Activated CD4-positive, alpha-beta memory T cell treated with anti-CD3 and anti-CD28 coated beads for 36 hours (primary cell): ENCODE measurements at regions of chr19 and their contacts with region 1.

Region 1: GRCh38 chr19:2475702-2476450 is at the start of gene GADD45B:
- DNase-seq: peak; percentile 98
- H3K4me3 Mint-ChIP-seq: peak within 1 kb of the TSS; percentile 93
- H3K27ac Mint-ChIP-seq: peak within 1 kb of the TSS; percentile 91
- H3K4me1 Mint-ChIP-seq: peaks cover 18% of the 10 kb centered on the region
- H3K27me3 Mint-ChIP-seq: peaks cover 3% of the 10 kb centered on the region
- total RNA-seq, gene GADD45B: 34.5 to 38.1 TPM

Region 2: DNA sequence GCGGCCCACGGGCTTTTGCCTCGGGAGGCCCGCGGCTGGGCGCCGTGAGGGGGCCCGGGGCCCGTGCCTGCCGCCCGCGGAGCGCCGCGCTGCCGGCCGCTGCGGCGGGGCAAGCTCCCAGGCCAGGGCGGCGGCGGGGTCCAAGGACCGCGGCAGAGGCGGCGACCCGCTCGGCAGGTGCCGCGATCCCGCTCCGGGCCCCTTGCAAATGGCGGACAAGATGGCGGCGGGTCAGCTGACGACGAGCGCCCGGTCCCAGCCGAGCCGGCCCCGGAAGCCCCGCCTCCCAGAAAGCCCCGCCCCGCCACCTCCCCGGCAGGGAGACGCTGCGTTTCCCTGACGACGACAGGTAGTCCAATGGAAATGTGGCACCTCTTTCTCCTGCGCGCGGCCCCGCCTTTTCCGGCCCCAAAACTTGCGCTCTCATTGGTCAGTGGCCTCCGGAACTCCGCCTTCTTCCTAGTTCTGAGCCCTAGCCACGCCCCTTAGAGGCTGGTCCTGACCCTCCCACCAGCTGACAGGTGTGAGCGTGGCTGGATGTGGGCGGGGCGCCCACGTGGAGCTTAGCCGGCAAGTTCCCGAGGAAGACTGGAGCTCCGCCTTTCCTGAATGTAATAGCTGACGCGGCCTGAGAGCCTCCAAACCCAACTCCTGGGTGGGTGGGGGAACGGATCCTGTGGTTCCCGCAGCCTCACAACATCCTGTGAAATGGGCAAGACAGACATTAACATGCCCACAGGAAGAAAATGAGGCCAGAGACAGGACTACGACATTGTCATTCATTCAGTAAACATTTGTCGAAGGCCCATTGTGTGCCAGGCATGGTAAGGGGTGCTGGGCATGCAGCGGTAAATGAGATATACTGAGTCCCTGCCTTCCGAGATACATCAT is 324.3 kb before region 1 on chr19 and contains the start of gene AP3D1:
- CTCF ChIA-PET with region 1: no interaction called
- POLR2A ChIA-PET with region 1: no interaction called
- intact Hi-C with region 1: no loop called
- DNase-seq: peak; percentile 100
- H3K4me3 Mint-ChIP-seq: peak within 1 kb of the TSS; percentile 82
- H3K27ac Mint-ChIP-seq: peak within 1 kb of the TSS; percentile 82
- H3K4me1 Mint-ChIP-seq: peaks cover 43% of the 10 kb centered on the region
- H3K27me3 Mint-ChIP-seq: no peaks in the 10 kb centered on the region
- total RNA-seq, gene AP3D1: 84.6 to 89.1 TPM

Region 3: GRCh38 chr19:2412449-2412848 is 63.4 kb before region 1 on chr19:
- CTCF ChIA-PET with region 1: no interaction called
- POLR2A ChIA-PET with region 1: no interaction called
- intact Hi-C with region 1: no loop called
- DNase-seq: no peak
- H3K4me3 Mint-ChIP-seq: no peak overlapping the region
- H3K27ac Mint-ChIP-seq: no peak overlapping the region
- H3K4me1 Mint-ChIP-seq: no peaks in the 10 kb centered on the region
- H3K27me3 Mint-ChIP-seq: peaks cover 2% of the 10 kb centered on the region

Region 4: GRCh38 chr19:2461751-2462634 is 13.9 kb before region 1 on chr19:
- CTCF ChIA-PET with region 1: interaction called, 9 read pairs
- POLR2A ChIA-PET with region 1: interaction called, 10 read pairs
- intact Hi-C with region 1: no loop called
- DNase-seq: peak; percentile 81
- H3K4me3 Mint-ChIP-seq: peak overlapping the region; percentile 92
- H3K27ac Mint-ChIP-seq: peak overlapping the region; percentile 68
- H3K4me1 Mint-ChIP-seq: peaks cover 7% of the 10 kb centered on the region
- H3K27me3 Mint-ChIP-seq: no peaks in the 10 kb centered on the region

Region 5: DNA sequence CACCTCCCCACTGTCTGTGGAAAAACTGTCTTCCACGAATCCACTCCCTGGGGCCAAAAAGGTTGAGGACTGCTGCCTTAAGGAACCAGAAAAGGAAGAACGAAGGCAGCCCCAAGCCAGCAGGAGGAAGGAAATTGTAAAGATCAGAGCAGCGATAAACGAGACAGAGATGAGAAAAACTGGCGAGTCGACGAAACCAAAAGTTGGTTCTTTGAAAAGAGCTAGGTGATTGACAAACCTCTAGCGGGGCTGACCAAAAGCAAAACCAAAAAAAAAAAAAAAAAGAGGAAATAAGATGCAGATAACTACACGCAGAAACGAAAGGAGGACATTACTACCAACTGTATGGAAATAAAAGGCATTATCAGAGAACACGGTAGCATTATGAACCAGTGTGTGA is 77.0 kb after region 1 on chr19:
- CTCF ChIA-PET with region 1: interaction called, 9 read pairs
- POLR2A ChIA-PET with region 1: interaction called, 39 read pairs
- intact Hi-C with region 1: loop called (anchors 2 kb)
- DNase-seq: peak; percentile 69
- H3K4me3 Mint-ChIP-seq: peak overlapping the region; percentile 59
- H3K27ac Mint-ChIP-seq: peak overlapping the region; percentile 72
- H3K4me1 Mint-ChIP-seq: peaks cover 19% of the 10 kb centered on the region
- H3K27me3 Mint-ChIP-seq: no peaks in the 10 kb centered on the region

Region 6: GRCh38 chr19:2602391-2603181 is 126.7 kb after region 1 on chr19:
- CTCF ChIA-PET with region 1: interaction called, 174 read pairs
- POLR2A ChIA-PET with region 1: interaction called, 65 read pairs
- intact Hi-C with region 1: loop called (anchors 1 kb)
- DNase-seq: no peak
- H3K4me3 Mint-ChIP-seq: no peak overlapping the region
- H3K27ac Mint-ChIP-seq: no peak overlapping the region
- H3K4me1 Mint-ChIP-seq: peaks cover 15% of the 10 kb centered on the region
- H3K27me3 Mint-ChIP-seq: peaks cover 3% of the 10 kb centered on the region

Region 7: GRCh38 chr19:2627319-2627829 is 151.5 kb after region 1 on chr19:
- CTCF ChIA-PET with region 1: interaction called, 4 read pairs
- POLR2A ChIA-PET with region 1: interaction called, 123 read pairs
- intact Hi-C with region 1: no loop called
- DNase-seq: peak; percentile 80
- H3K4me3 Mint-ChIP-seq: no peak overlapping the region
- H3K27ac Mint-ChIP-seq: peak overlapping the region; percentile 75
- H3K4me1 Mint-ChIP-seq: peaks cover 30% of the 10 kb centered on the region
- H3K27me3 Mint-ChIP-seq: no peaks in the 10 kb centered on the region